WTC11 (cell line): ENCODE measurements at regions of chr19 and their contacts with region 1.

Region 1: GRCh38 chr19:8158411-8159074 is 9.2 kb upstream of the FBN3 start:
- DNase-seq: peak; percentile 47
- ATAC-seq: peak; percentile 61
- H3K4me3 Mint-ChIP-seq: no peak overlapping the region
- H3K27ac Mint-ChIP-seq: peak overlapping the region; percentile 80; the same call in 1 of the 2 replicates
- H3K4me1 Mint-ChIP-seq: peaks cover 25% of the 10 kb centered on the region
- H3K27me3 Mint-ChIP-seq: peaks cover 3% of the 10 kb centered on the region; the same call in 1 of the 2 replicates
- CTCF ChIP-seq: peak; percentile 57

Region 2: DNA sequence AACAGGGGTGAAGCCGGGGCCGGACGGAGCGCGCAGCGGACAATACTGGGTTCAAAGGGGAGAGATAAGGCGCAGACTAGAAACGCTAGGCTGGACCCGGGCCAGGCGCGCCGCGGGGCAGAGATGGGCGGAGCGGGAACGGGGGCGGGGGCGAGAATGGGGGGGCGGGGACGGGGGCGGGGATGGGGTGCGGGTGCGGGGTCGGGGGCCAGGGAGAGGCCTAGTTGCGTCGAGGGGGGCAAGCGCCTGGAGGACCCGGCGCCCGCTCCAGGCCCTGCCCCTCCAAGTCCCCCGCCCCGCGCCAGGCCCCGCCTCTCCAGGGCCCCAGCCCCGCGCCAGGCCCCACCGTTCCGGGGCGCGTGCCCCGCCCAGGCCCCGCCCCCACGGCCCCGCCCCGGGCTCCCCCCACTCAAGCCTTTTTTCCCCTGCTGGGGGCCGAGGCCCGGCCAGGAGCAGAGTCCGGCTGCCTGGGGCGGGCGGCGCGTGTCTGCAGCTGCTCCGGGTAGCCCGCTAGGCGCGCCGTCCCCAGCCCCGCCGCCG is 50.4 kb after region 1 on chr19 and contains the start of gene CERS4:
- CTCF ChIA-PET with region 1: interaction called, 13 read pairs
- POLR2A ChIA-PET with region 1: interaction called, 3 read pairs
- DNase-seq: peak; percentile 92
- ATAC-seq: peak; percentile 79
- H3K4me3 Mint-ChIP-seq: peak within 1 kb of the TSS; percentile 86
- H3K27ac Mint-ChIP-seq: peak within 1 kb of the TSS; percentile 82
- H3K4me1 Mint-ChIP-seq: peaks cover 68% of the 10 kb centered on the region
- H3K27me3 Mint-ChIP-seq: no peaks in the 10 kb centered on the region
- CTCF ChIP-seq: no peak
- total RNA-seq, gene CERS4: 116 to 153 TPM (median 150 TPM) in 3 replicates

Region 3: DNA sequence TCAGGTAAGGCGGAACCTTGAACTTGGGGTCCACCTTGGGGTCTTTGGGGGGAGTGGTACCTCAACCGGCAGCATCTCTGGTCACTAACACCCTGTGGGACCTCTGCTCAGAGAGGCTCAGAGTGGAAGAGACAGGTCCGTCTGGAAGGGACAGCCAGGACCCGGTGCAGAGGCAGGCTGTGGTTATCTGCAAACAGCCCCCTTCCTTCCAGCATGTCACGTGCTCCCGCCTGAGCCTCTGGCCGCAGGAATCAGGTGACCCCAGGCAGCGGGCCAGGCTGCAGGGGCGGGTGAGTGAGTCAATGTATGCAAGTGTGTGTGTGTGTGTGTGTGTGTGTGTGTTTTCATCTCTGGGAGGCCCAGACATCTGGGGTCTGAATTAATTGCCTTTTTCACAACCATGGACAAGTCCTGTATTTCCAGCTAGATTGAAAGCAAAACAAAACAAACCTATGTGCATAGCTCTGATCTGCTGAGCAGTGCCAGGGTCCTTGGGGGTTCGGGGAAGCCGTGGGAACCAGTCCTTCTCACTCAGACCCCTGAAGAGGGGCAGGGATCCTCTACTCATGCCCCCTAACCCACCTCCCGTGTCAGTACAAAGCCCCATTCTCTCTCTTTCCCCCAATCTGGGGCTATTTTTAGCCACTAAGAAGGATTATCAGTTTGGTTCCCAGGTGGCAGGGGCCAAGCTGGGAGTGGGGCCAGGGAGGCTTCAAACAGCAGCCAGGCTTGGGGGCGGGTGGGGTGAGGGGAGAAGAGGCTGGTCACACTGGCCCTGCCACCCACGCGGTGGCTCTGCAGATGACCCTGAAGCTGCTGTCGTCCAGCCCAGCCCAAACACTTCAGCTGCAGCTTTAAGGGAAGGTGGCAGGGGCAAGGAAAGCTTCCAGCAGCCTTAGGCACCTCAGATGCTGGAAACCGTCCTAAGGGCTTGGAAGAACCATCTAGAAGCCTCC is 82.0 kb after region 1 on chr19:
- CTCF ChIA-PET with region 1: interaction called, 14 read pairs
- POLR2A ChIA-PET with region 1: no interaction called
- DNase-seq: peak; percentile 76
- ATAC-seq: peak; percentile 89
- H3K4me3 Mint-ChIP-seq: no peak overlapping the region
- H3K27ac Mint-ChIP-seq: peak overlapping the region; percentile 85
- H3K4me1 Mint-ChIP-seq: peaks cover 19% of the 10 kb centered on the region
- H3K27me3 Mint-ChIP-seq: no peaks in the 10 kb centered on the region
- CTCF ChIP-seq: no peak

Region 4: GRCh38 chr19:8252922-8253589 is 94.5 kb after region 1 on chr19:
- CTCF ChIA-PET with region 1: interaction called, 55 read pairs
- POLR2A ChIA-PET with region 1: no interaction called
- DNase-seq: peak; percentile 95
- ATAC-seq: peak; percentile 88
- H3K4me3 Mint-ChIP-seq: no peak overlapping the region
- H3K27ac Mint-ChIP-seq: no peak overlapping the region
- H3K4me1 Mint-ChIP-seq: peaks cover 3% of the 10 kb centered on the region; the same call in 1 of the 2 replicates
- H3K27me3 Mint-ChIP-seq: no peaks in the 10 kb centered on the region
- CTCF ChIP-seq: peak; percentile 97

Region 5: DNA sequence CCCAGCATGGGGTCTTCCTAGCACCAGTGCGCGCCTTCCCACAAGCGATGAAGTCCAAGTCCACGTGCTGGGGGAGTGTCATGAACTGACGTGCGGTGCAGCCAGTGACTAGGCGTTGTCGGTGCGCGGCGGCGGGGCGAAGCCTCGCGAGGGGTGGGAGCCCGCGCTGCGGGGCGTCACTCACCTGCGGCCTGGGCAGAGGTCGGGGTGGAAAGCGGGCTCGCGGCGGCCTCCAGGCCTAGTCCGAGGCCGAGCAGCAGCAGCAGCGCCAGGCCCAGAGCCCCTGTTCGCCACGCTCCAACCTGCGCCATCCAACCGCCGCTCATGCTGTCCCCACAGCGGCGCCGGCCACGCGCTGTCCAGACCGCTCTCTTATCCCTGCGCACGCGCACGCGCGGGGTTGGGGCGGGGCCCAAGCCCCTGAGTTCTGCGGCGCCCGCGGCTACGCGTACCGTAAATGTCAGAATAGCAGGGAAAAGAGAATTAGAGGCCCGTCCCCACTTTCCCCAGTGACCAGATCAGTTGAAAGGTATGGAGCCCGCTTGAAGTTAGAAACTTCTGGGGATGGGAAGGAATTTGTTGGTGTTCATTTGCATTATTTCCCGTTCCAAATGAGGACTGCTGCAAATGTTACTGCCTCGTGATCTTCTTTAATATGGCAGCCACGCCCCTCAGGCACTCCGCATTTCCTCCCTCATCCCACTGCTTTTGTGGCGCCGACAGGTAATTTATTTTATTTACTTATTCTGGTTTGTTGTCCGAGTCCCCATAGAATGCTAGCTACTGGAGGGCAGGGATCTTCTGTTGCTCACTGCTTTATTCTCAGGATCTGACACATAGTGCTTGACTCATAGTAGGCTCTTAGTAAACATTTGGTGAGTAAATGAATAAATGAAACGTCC is 149.7 kb after region 1 on chr19 and contains the start of gene CD320:
- CTCF ChIA-PET with region 1: no interaction called
- POLR2A ChIA-PET with region 1: no interaction called
- DNase-seq: peak; percentile 87
- ATAC-seq: peak; percentile 67
- H3K4me3 Mint-ChIP-seq: peak within 1 kb of the TSS; percentile 86
- H3K27ac Mint-ChIP-seq: peak within 1 kb of the TSS; percentile 91
- H3K4me1 Mint-ChIP-seq: peaks cover 33% of the 10 kb centered on the region
- H3K27me3 Mint-ChIP-seq: no peaks in the 10 kb centered on the region
- CTCF ChIP-seq: no peak
- total RNA-seq, gene CD320: 107 to 121 TPM (median 114 TPM) in 3 replicates